Activated T-helper 1 cell treated with anti-CD3 and anti-CD28 coated beads, Interleukin-12 subunit alpha, Interleukin-12 subunit beta, Interleukin-2, Interleukin-4 antibody, amounts not matched to agents 30 ng/mL and 10 ng/mL and 1 ng/mL, durations not matched to agents 14 hours and 24 hours and 36 hours (primary cell): ENCODE measurements at regions of chr1 and their contacts with region 1.

Region 1: GRCh38 chr1:224329842-224330753 is at the start of gene NVL:
- DNase-seq: peak; percentile 76
- H3K4me3 Mint-ChIP-seq: peak within 1 kb of the TSS; percentile 98
- H3K27ac Mint-ChIP-seq: peak within 1 kb of the TSS; percentile 100
- H3K4me1 Mint-ChIP-seq: peaks cover 45% of the 10 kb centered on the region
- H3K27me3 Mint-ChIP-seq: no peaks in the 10 kb centered on the region
- total RNA-seq, gene NVL: 47.2 and 47.6 TPM in 2 replicates

Region 2: DNA sequence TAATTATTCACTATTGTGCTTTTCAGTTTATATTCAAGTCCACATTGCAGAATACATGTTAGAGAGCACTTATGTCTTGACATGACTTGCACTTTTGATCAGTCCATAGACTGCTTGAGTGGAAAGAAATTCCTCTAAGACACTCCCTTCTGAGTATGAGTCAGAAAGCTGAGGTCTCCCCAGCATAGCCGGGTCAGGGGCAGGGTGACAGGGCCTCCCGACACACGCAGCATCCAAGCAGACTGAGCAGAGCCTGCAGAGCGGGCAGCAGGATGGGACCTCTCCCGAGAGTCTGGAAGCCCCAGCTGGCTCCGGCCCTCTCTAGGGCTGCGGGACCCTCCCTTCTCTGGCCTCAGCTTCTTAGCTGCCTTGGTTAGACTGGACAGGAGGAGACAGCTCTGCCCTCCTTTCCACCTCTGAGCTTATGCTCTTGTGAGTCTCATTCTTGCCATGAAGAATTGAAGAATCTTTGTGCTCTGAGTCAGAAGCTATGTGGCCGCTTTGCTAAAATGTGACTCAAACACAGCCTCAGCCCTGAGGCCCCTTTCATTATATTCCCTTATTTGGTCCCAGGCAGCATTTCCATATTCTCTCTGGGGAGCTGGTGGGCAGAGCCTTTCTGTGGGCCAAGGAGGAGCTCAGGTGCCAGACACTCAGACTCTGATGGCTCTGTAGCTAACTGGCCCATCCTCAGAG is 629.0 kb before region 1 on chr1:
- intact Hi-C with region 1: loop called (anchors 1 kb)
- DNase-seq: no peak
- H3K4me3 Mint-ChIP-seq: no peak overlapping the region
- H3K27ac Mint-ChIP-seq: peak overlapping the region; percentile 83
- H3K4me1 Mint-ChIP-seq: peaks cover 54% of the 10 kb centered on the region
- H3K27me3 Mint-ChIP-seq: peaks cover 4% of the 10 kb centered on the region

Region 3: GRCh38 chr1:223726380-223727001 is 603.6 kb before region 1 on chr1:
- intact Hi-C with region 1: no loop called
- DNase-seq: peak; percentile 86
- H3K4me3 Mint-ChIP-seq: peak overlapping the region; percentile 77
- H3K27ac Mint-ChIP-seq: peak overlapping the region; percentile 95
- H3K4me1 Mint-ChIP-seq: peaks cover 85% of the 10 kb centered on the region
- H3K27me3 Mint-ChIP-seq: no peaks in the 10 kb centered on the region

Region 4: GRCh38 chr1:223831755-223832636 is 498.1 kb before region 1 on chr1:
- intact Hi-C with region 1: loop called (anchors 5 kb)
- DNase-seq: no peak
- H3K4me3 Mint-ChIP-seq: peak overlapping the region; percentile 23
- H3K27ac Mint-ChIP-seq: peak overlapping the region; percentile 90
- H3K4me1 Mint-ChIP-seq: peaks cover 10% of the 10 kb centered on the region
- H3K27me3 Mint-ChIP-seq: no peaks in the 10 kb centered on the region

Region 5: DNA sequence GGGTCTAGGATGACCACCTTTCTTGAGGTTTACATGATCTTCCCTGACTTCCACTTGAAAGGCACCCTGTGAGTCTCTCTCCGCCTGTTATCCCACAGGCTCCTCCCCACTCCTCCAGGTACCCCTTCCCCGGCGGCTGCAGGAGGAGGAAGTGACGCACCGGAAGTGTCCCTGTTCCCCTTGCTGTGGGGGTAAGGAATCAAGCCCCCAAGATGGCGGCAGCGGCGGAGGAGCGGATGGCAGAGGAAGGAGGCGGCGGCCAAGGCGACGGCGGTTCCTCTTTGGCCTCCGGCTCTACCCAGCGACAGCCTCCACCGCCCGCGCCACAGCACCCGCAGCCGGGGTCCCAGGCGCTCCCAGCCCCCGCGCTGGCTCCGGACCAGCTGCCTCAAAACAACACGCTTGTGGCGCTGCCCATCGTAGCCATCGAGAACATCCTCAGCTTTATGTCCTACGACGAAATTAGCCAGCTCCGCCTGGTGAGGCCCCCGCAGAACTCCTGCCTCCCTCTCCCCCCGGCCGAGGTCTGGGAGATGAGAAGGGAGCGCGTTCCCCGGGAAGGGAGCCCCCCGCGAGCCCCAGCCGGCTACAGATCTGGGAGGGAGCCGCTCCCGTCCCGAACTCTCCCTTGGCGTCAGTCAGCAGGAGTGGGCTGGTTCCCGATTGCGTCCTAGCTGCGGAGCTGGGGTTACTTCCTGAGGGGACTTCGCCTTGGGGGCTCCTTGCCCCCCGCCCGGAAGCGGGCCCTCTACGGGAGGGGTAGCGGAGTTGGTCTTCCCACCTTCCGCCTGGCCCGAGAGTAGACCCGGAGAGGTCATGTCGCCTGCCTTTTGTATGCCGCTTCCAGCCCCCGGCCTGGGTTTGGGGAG is 215.9 kb before region 1 on chr1 and contains the start of gene FBXO28:
- intact Hi-C with region 1: loop called (anchors 1 kb)
- DNase-seq: peak; percentile 90
- H3K4me3 Mint-ChIP-seq: peak within 1 kb of the TSS; percentile 91
- H3K27ac Mint-ChIP-seq: peak within 1 kb of the TSS; percentile 89
- H3K4me1 Mint-ChIP-seq: peaks cover 27% of the 10 kb centered on the region
- H3K27me3 Mint-ChIP-seq: peaks cover 19% of the 10 kb centered on the region
- total RNA-seq, gene FBXO28: 29.3 and 32.2 TPM in 2 replicates

Region 6: GRCh38 chr1:224182866-224183590 is 147.1 kb before region 1 on chr1 and contains the start of gene DEGS1:
- intact Hi-C with region 1: loop called (anchors 1 kb)
- DNase-seq: peak; percentile 80
- H3K4me3 Mint-ChIP-seq: peak within 1 kb of the TSS; percentile 96
- H3K27ac Mint-ChIP-seq: peak within 1 kb of the TSS; percentile 93
- H3K4me1 Mint-ChIP-seq: peaks cover 46% of the 10 kb centered on the region
- H3K27me3 Mint-ChIP-seq: peaks cover 3% of the 10 kb centered on the region
- total RNA-seq, gene DEGS1: 54.7 and 57.1 TPM in 2 replicates

Region 7: DNA sequence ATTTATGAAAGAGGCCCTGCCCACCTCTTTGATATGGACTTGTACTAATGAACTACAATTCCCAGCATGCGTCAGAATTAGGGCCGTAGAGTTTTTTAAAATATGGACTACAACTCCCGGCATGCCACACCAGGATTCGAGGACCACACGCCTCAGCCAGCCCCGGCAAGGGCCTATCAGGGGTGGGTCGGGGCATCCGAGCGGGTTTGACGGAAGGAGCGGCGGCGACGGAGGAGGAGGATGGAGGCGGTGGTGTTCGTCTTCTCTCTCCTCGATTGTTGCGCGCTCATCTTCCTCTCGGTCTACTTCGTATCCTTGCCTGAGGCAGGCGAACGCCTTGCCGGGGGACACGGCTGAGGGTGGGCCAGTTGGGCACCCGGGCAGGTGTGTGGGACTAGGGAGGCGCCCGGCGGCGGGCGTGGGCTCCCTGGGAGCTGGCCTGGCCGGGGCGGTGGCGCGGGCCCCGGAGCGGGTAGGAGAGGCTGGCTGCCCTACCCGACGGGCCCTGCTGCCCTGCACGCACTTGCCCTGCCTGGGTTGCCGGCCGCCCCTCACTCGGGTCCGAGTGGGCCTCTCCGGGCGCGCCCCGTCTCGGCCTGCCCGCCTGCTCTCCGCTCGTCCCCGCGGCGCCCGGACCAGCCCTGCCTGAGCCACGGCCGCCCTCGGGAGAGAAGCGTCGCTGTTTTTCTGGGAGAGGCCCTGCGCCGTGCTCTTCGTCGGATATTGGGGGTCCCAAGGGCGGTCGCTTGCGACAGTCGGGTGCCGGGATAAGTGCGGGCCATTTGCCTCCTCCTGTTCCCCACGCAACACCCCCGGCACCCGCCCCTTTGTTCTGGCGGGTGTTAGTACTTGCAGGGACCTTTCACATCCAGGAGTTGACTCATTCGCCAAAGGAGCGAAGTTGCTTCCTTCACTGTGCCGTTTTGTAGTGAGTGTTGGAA is 26.9 kb after region 1 on chr1 and contains the start of gene CNIH4:
- intact Hi-C with region 1: loop called (anchors 1 kb)
- DNase-seq: peak; percentile 89
- H3K4me3 Mint-ChIP-seq: peak within 1 kb of the TSS; percentile 93
- H3K27ac Mint-ChIP-seq: peak within 1 kb of the TSS; percentile 93
- H3K4me1 Mint-ChIP-seq: peaks cover 28% of the 10 kb centered on the region
- H3K27me3 Mint-ChIP-seq: no peaks in the 10 kb centered on the region
- total RNA-seq, gene CNIH4: 80.7 and 82.3 TPM in 2 replicates

Region 8: GRCh38 chr1:224454397-224455066 is 124.4 kb after region 1 on chr1:
- intact Hi-C with region 1: loop called (anchors 2 kb)
- DNase-seq: no peak
- H3K4me3 Mint-ChIP-seq: no peak overlapping the region
- H3K27ac Mint-ChIP-seq: no peak overlapping the region
- H3K4me1 Mint-ChIP-seq: peaks cover 31% of the 10 kb centered on the region
- H3K27me3 Mint-ChIP-seq: no peaks in the 10 kb centered on the region